Posterior cingulate gyrus (tissue), 11 donors: ENCODE measurements at regions of chr19 and their contacts with region 1.

Region 1: GRCh38 chr19:7293795-7294570 is at the start of gene INSR:
- DNase-seq: peak; percentile 81 to 98 (median 86)

Region 2: DNA sequence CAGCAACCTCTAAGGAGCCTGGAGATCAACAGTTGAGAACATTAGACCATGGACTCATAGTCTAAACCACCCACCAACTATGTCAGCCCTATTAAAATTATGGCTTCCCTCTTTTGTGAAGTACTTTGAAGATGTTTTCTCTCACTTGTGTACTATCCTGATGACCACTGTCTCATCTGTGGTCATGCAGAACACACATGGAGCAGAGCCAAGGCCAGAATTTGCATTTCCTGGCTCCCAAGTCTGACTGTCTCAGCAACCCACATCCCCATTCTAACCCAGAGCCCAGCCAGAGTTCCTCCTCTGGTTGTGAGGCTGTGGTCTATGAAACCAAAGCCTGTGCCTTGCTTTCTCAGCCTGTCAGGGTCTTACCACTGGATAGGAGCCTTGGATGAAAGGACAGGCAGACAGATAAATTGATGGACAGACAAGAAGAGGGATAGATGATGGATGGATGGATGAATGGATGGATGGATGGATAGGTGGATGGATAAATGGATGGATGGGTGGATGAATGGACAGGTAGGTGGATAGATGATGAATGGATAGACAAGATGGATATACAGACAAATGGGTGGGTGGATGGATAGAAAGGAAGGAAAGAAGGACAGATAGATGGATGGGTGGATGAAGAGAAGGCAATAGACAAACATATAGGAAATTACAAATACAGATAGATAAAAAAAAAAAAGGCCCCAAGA is 189.1 kb before region 1 on chr19:
- intact Hi-C with region 1: loop called (anchors 5 kb)
- DNase-seq: peak in 1 of 10 donors; percentile 11

Region 3: GRCh38 chr19:7149956-7150705 is 143.9 kb before region 1 on chr19:
- intact Hi-C with region 1: loop called (anchors 2 kb)
- DNase-seq: no peak

Region 4: DNA sequence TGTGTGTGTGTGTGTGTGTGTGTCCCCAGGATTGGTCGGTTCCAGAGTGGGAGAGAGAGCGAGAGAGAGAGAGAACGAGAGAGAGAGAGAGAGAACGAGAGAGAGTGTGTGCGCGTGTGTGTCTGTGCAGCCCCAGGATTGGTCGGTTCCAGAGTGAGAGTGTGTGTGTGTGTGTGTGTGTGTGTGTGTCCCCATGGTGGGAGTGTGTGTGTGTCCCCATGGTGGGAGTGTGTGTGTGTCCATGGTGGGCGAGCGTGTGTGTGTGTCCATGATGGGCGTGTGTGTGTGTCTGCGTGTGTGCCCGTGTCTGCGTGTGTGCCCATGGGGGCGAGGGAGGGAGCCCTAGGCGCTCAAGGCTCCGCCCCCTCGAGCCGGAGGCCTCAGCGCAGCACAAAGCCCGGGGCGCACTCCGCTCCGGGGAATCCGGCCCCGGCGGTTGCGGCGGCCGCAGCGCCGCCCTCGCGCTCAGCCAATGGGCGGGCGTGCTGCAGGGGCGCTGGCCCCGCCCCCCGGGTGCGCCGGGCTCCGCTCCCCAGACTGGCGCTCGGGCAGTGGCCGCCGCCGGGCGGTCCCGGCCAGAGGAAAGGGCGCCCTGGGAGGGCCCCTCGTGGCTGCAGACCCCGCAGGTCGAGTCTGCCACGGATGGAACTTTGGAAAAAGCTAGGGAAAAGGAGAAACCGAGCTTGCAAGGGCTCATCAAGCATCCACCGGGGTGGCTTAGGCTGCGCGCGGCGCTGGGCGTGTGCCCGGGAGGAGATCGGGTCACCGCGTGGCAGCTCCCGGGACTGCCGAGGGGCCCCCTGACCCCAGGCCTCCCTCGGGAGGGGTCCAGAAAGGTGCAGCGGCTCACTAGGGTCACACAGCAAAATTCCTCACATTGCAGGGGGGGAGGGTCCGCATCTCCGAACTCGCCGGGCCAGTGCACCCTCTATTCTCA is 96.0 kb before region 1 on chr19:
- intact Hi-C with region 1: loop called (anchors 1 kb)
- DNase-seq: peak; percentile 79 to 99 (median 90)

Region 5: GRCh38 chr19:7395360-7396066 is 101.5 kb after region 1 on chr19:
- intact Hi-C with region 1: no loop called
- DNase-seq: peak in 3 of 10 donors; percentile 10 to 84 (median 33)